Tibial artery (tissue), 4 donors: ENCODE measurements at regions of chr18 and their contacts with region 1.

Region 1: DNA sequence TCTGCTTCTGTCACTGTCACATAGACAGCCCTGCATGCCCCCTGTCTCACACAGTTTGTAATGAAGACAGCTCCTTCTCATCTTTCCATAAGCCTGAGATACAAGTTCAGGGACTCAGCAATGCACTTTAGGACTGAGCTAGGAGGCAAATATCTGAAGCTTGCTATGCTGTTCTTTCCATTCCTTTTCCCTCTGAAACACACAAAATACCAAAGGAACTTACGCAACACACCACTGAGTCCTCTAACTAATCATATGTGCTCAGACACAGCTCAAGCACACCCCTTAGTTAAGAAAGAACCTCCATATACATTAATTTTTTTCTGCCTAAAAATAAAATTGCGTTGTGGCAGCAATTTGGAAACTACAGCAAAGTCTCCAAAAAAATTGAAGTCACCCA is 17.9 kb downstream of the SERPINB8 start:
- DNase-seq: no peak
- H3K4me3 ChIP-seq: no peak overlapping the region
- H3K27ac ChIP-seq: no peak overlapping the region
- H3K4me1 ChIP-seq: no peaks in the 10 kb centered on the region
- H3K27me3 ChIP-seq: no peaks in the 10 kb centered on the region
- CTCF ChIP-seq: no peak

Region 2: DNA sequence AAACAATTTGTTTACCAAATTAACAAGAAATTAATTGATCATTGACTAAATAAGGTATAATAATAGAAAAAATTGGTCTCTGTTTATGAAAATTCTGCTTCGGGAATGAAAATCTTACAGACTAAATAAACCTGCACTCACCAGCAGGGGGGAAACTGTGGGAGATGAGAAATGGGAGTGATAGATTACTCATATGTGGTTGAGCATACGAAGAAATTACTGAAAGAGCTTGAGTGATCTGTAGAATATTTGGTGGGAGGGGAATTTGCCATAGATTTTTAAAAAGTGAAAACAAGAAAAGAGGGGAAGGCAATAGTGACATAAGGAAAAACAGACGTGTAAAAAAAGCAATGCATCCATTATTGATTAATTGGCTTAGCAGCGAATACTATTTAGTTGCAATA is 36.4 kb before region 1 on chr18:
- intact Hi-C with region 1: loop called (anchors 5 kb)
- DNase-seq: no peak
- H3K4me3 ChIP-seq: no peak overlapping the region
- H3K27ac ChIP-seq: no peak overlapping the region
- H3K4me1 ChIP-seq: peaks cover 0 to 12% (median 6%) of the 10 kb centered on the region in 4 donors
- H3K27me3 ChIP-seq: peaks cover 0 to 10% of the 10 kb centered on the region in 2 donors
- CTCF ChIP-seq: no peak